ENCODE measurements at regions of chr2 and their contacts with region 1.

Region 1: DNA sequence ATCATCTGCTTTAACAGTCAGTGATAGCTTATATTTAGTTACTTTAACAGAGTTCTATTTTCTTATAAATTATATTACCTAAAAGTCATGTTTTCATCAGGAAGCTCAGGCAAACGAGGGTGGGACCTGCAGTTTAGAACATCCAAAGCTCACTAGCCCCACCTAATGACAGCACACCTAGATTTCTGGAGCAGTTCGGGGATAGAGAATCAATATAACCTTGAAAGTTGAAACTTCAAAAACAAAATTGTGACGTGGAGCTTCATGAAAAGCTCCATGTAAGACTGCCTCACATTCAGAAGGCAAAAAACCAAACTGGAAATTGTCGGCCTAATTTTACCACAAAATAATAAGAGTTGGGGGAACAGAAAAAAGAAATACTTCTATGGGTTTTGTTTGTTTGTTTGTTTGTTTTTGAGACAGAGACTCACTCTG is 185.9 kb upstream of the CCDC150 start:
- DNase-seq: peak; percentile 32
- H3K4me3 Mint-ChIP-seq: no peak overlapping the region
- H3K27ac Mint-ChIP-seq: no peak overlapping the region
- H3K4me1 Mint-ChIP-seq: no peaks in the 10 kb centered on the region
- H3K27me3 Mint-ChIP-seq: peaks cover 37% of the 10 kb centered on the region

Region 2: GRCh38 chr2:196068271-196069209 is 385.1 kb before region 1 on chr2 and contains the start of gene DNAH7:
- CTCF ChIA-PET with region 1: interaction called, 18 read pairs
- POLR2A ChIA-PET with region 1: no interaction called
- DNase-seq: peak; percentile 94
- H3K4me3 Mint-ChIP-seq: peak within 1 kb of the TSS; percentile 78
- H3K27ac Mint-ChIP-seq: peak within 1 kb of the TSS; percentile 38
- H3K4me1 Mint-ChIP-seq: peaks cover 12% of the 10 kb centered on the region
- H3K27me3 Mint-ChIP-seq: peaks cover 17% of the 10 kb centered on the region
- total RNA-seq, gene DNAH7: not detected

Region 3: GRCh38 chr2:196076778-196077568 is 376.7 kb before region 1 on chr2:
- CTCF ChIA-PET with region 1: interaction called, 58 read pairs
- POLR2A ChIA-PET with region 1: interaction called, 5 read pairs
- DNase-seq: no peak
- H3K4me3 Mint-ChIP-seq: no peak overlapping the region
- H3K27ac Mint-ChIP-seq: no peak overlapping the region
- H3K4me1 Mint-ChIP-seq: peaks cover 10% of the 10 kb centered on the region
- H3K27me3 Mint-ChIP-seq: no peaks in the 10 kb centered on the region

Region 4: DNA sequence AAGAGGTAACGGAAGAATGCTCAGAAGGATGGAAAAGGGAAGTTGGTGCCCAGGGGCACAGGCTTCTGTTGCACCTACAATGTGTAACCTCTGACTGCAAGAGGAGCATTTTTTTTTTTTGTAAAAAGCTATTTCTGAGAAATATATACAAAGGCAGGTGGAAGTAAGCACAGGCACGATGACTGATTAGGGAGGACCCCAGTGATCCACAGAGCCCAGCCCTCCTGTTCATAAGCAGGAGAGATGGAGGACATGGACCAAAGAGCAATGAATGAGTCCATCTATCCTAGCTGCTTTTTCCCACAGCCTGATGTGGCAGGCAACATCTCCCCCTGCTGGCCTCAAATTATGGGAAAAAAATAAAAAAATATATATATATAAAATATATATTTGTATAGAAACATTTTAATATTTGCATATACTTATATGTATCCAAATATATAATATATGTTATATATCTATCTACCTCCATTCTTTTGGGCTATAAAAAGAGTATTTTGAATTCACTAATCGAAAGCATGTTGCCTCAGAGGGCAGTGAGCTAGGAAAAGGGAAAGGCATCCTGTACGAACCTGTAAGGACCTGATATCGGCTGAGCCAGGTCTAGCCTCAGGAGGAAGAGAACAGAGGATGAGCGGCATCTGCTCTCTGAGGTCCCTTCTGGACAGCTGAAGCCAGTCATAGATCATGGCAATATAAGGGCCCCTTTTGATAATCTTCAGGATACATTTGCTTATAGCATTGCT is 116.2 kb before region 1 on chr2:
- CTCF ChIA-PET with region 1: interaction called, 13 read pairs
- POLR2A ChIA-PET with region 1: no interaction called
- DNase-seq: peak; percentile 23
- H3K4me3 Mint-ChIP-seq: no peak overlapping the region
- H3K27ac Mint-ChIP-seq: no peak overlapping the region
- H3K4me1 Mint-ChIP-seq: peaks cover 2% of the 10 kb centered on the region
- H3K27me3 Mint-ChIP-seq: peaks cover 7% of the 10 kb centered on the region

Region 5: GRCh38 chr2:196464311-196464710 is 10.7 kb after region 1 on chr2:
- CTCF ChIA-PET with region 1: interaction called, 26 read pairs
- POLR2A ChIA-PET with region 1: no interaction called
- DNase-seq: no peak
- H3K4me3 Mint-ChIP-seq: no peak overlapping the region
- H3K27ac Mint-ChIP-seq: no peak overlapping the region
- H3K4me1 Mint-ChIP-seq: peaks cover 9% of the 10 kb centered on the region
- H3K27me3 Mint-ChIP-seq: peaks cover 56% of the 10 kb centered on the region

Measured in activated CD4-positive, alpha-beta memory T cell treated with anti-CD3 and anti-CD28 coated beads, Interleukin-2, amount 10 ng/mL, durations not matched to agents 7 days and 5 days (primary cell).